Activated naive CD4-positive, alpha-beta T cell treated with anti-CD3 and anti-CD28 coated beads, Interleukin-2, amount 10 ng/mL, durations not matched to agents 7 days and 5 days (primary cell): ENCODE measurements at regions of chr1 and their contacts with region 1.

Region 1: DNA sequence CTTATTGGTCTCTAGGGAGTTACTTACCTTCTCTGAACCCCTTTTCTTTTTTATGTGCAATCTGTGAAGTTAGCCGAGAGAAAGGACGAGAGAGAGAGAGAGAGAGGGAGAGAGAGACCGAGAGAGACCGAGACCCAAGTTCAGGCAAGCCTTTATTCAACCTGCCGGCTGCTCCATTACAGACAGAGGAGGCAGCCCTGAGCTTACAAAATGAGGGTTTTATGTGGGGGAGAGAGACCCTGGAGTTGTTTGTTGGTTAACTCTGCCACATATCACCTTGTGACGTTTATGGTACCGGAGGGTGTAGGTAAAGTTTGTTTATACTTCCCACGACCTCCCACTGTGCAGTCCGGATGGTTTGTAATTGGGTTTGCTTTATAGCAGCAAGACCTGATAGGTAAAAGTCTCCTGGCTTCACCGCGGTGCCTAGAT is 1.5 kb upstream of the MCOLN3 start:
- DNase-seq: no peak
- H3K4me3 Mint-ChIP-seq: peak overlapping the region; percentile 55
- H3K27ac Mint-ChIP-seq: no peak overlapping the region
- H3K4me1 Mint-ChIP-seq: peaks cover 36% of the 10 kb centered on the region
- H3K27me3 Mint-ChIP-seq: peaks cover 42% of the 10 kb centered on the region

Region 2: GRCh38 chr1:85061711-85062424 is 12.1 kb after region 1 on chr1:
- CTCF ChIA-PET with region 1: interaction called, 15 read pairs
- DNase-seq: peak; percentile 93
- H3K4me3 Mint-ChIP-seq: peak overlapping the region; percentile 80
- H3K27ac Mint-ChIP-seq: peak overlapping the region; percentile 80
- H3K4me1 Mint-ChIP-seq: peaks cover 21% of the 10 kb centered on the region
- H3K27me3 Mint-ChIP-seq: peaks cover 26% of the 10 kb centered on the region